Endothelial cell of umbilical vein (primary cell): ENCODE measurements at regions of chr3 and their contacts with region 1.

Region 1: DNA sequence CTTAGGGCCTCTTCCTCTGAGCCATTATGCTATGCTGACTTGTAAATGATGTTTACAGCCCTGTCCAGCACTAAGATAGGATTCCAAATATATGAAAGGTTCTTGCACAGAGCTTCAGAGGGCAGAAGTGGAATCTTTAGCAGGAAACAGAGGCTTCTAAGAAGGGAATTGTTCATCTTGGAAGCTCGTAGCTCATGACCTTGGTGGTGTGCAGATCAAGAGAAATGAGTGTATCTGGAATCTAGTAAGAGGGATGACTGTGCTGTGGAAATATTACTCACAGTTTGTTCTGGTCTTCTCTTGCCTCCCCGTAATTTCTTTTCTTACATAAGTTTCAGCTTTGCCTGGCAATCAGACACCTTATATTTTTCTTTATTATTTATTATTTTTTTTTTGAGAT is 175.8 kb downstream of the SPATA16 start:
- DNase-seq: peak; percentile 19
- H3K4me3 ChIP-seq: no peak overlapping the region
- H3K27ac ChIP-seq: no peak overlapping the region
- H3K4me1 ChIP-seq: no peaks in the 10 kb centered on the region
- H3K27me3 ChIP-seq: no peaks in the 10 kb centered on the region
- CTCF ChIP-seq: no peak
- POLR2A ChIP-seq: no peak

Region 2: GRCh38 chr3:172953571-172953970 is 11.7 kb before region 1 on chr3:
- CTCF ChIA-PET with region 1: interaction called, 4 read pairs
- POLR2A ChIA-PET with region 1: no interaction called
- dilution Hi-C with region 1: no loop called
- intact Hi-C with region 1: loop called (anchors 2 kb)
- DNase-seq: no peak
- H3K4me3 ChIP-seq: no peak overlapping the region
- H3K27ac ChIP-seq: no peak overlapping the region
- H3K4me1 ChIP-seq: no peaks in the 10 kb centered on the region
- H3K27me3 ChIP-seq: no peaks in the 10 kb centered on the region
- CTCF ChIP-seq: no peak
- POLR2A ChIP-seq: no peak